ENCODE measurements at regions of chr3 and their contacts with region 1.

Region 1: GRCh38 chr3:172511783-172512762 is 11.2 kb downstream of the TNFSF10 start:
- H3K4me3 Mint-ChIP-seq: peak overlapping the region; percentile 30
- H3K27ac Mint-ChIP-seq: peak overlapping the region; percentile 76
- H3K4me1 Mint-ChIP-seq: peaks cover 65% of the 10 kb centered on the region
- H3K27me3 Mint-ChIP-seq: no peaks in the 10 kb centered on the region

Region 2: DNA sequence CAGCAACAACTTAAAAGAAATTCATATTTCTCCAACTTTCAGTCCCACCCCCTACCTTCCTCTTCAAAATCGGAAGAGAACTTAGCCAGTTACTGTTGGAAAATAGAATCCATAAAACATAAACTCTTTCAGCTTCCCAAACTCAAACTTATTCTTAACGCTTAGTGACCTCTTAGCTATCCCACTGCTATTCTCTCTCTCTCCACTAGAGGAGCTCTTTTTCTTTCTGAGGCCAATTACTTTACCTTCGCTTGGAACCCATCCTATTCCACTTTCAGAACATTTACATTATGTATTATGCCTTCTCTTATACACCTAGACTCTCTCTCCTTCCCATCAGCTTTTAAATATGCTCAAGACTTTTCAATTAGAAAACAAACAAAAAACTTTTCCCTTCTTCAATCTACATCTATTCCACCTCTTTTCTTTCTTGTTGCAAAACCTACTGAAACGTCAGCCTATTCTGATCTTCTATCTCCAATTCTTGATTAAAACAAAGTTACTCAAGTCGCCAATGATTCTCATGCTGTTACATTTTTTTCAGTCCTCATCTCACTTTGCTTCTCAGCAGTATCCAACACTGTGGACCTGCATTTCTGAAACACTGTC is 50.4 kb before region 1 on chr3:
- intact Hi-C with region 1: no loop called
- H3K4me3 Mint-ChIP-seq: no peak overlapping the region
- H3K27ac Mint-ChIP-seq: no peak overlapping the region
- H3K4me1 Mint-ChIP-seq: peaks cover under 1% of the 10 kb centered on the region
- H3K27me3 Mint-ChIP-seq: peaks cover 5% of the 10 kb centered on the region

Region 3: GRCh38 chr3:172562871-172563863 is 51.1 kb after region 1 on chr3:
- intact Hi-C with region 1: loop called (anchors 5 kb)
- H3K4me3 Mint-ChIP-seq: peak overlapping the region; percentile 64
- H3K27ac Mint-ChIP-seq: peak overlapping the region; percentile 77
- H3K4me1 Mint-ChIP-seq: peaks cover 41% of the 10 kb centered on the region
- H3K27me3 Mint-ChIP-seq: peaks cover 2% of the 10 kb centered on the region

Region 4: GRCh38 chr3:172595641-172596393 is 83.7 kb after region 1 on chr3:
- intact Hi-C with region 1: loop called (anchors 5 kb)
- H3K4me3 Mint-ChIP-seq: peak overlapping the region; percentile 60
- H3K27ac Mint-ChIP-seq: peak overlapping the region; percentile 65
- H3K4me1 Mint-ChIP-seq: peaks cover 52% of the 10 kb centered on the region
- H3K27me3 Mint-ChIP-seq: peaks cover 2% of the 10 kb centered on the region